ENCODE measurements at regions of chr6 and their contacts with region 1.

Region 1: GRCh38 chr6:151425561-151425960 is 26.4 kb downstream of the RMND1 start:
- DNase-seq: no peak
- ATAC-seq: no peak
- H3K4me3 ChIP-seq: no peak overlapping the region
- H3K4me3 Mint-ChIP-seq: no peak overlapping the region
- H3K27ac ChIP-seq: no peak overlapping the region
- H3K27ac Mint-ChIP-seq: no peak overlapping the region
- H3K4me1 ChIP-seq: no peaks in the 10 kb centered on the region
- H3K4me1 Mint-ChIP-seq: no peaks in the 10 kb centered on the region
- H3K27me3 ChIP-seq: no peaks in the 10 kb centered on the region
- H3K27me3 Mint-ChIP-seq: no peaks in the 10 kb centered on the region

Region 2: DNA sequence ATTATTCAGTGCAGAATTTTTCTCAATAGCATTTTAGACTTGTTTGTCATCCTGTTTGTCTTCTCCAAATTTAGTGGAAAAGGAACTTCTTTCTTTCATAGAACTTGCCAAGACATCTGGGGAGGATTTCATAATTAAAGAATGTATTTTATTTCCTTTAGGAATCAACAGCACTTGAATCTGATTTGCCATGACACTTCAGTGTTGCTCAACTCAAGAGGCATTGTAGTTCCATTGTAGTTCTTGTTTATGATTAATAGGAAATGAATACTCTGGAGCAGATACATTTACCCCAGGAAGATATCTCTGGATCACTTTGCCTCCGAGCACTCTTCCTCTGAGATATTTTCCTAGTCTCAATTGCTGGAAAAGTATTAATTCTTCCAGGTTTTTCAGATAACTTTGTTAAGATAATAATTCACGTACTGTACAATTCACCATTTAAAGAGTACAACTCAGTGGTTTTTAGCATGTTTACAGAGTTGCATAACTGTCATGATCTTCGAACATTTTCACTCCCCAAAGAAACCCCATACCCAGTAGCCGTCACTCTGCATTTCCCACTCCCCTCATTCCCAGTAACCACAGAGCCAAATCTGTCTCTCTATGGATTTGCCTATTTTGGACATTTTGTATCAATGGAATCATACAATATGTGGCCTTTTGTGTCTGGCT is 156.1 kb before region 1 on chr6:
- CTCF ChIA-PET with region 1: no interaction called
- POLR2A ChIA-PET with region 1: no interaction called
- DNase-seq: no peak
- ATAC-seq: no peak
- H3K4me3 ChIP-seq: no peak overlapping the region
- H3K4me3 Mint-ChIP-seq: no peak overlapping the region
- H3K27ac ChIP-seq: no peak overlapping the region
- H3K27ac Mint-ChIP-seq: no peak overlapping the region
- H3K4me1 ChIP-seq: no peaks in the 10 kb centered on the region
- H3K4me1 Mint-ChIP-seq: no peaks in the 10 kb centered on the region
- H3K27me3 ChIP-seq: peaks cover 0 to 10% of the 10 kb centered on the region in 2 experiments
- H3K27me3 Mint-ChIP-seq: peaks cover 10 to 13% of the 10 kb centered on the region in 2 donors

Region 3: GRCh38 chr6:151524059-151524458 is 98.5 kb after region 1 on chr6:
- CTCF ChIA-PET with region 1: no interaction called
- POLR2A ChIA-PET with region 1: interaction called in 1 of 2 experiments, 10 read pairs
- DNase-seq: no peak
- ATAC-seq: no peak
- H3K4me3 ChIP-seq: no peak overlapping the region
- H3K4me3 Mint-ChIP-seq: no peak overlapping the region
- H3K27ac ChIP-seq: no peak overlapping the region
- H3K27ac Mint-ChIP-seq: no peak overlapping the region
- H3K4me1 ChIP-seq: no peaks in the 10 kb centered on the region
- H3K4me1 Mint-ChIP-seq: no peaks in the 10 kb centered on the region
- H3K27me3 ChIP-seq: peaks cover 0 to 3% of the 10 kb centered on the region in 2 experiments
- H3K27me3 Mint-ChIP-seq: peaks cover 6 to 11% of the 10 kb centered on the region in 2 donors

Region 4: GRCh38 chr6:151576633-151577032 is 151.1 kb after region 1 on chr6:
- CTCF ChIA-PET with region 1: no interaction called
- POLR2A ChIA-PET with region 1: no interaction called
- DNase-seq: no peak
- ATAC-seq: no peak
- H3K4me3 ChIP-seq: no peak overlapping the region
- H3K4me3 Mint-ChIP-seq: no peak overlapping the region
- H3K27ac ChIP-seq: no peak overlapping the region
- H3K27ac Mint-ChIP-seq: no peak overlapping the region
- H3K4me1 ChIP-seq: no peaks in the 10 kb centered on the region
- H3K4me1 Mint-ChIP-seq: no peaks in the 10 kb centered on the region
- H3K27me3 ChIP-seq: peaks cover 0 to 4% of the 10 kb centered on the region in 2 experiments
- H3K27me3 Mint-ChIP-seq: peaks cover 3 to 8% of the 10 kb centered on the region in 2 donors